Tibial artery (tissue), 4 donors: ENCODE measurements at regions of chr20 and their contacts with region 1.

Region 1: GRCh38 chr20:10708351-10709185 is 34.8 kb upstream of the JAG1 start:
- DNase-seq: no peak
- H3K4me3 ChIP-seq: no peak overlapping the region
- H3K27ac ChIP-seq: peak overlapping the region; percentile 62 to 67
- H3K4me1 ChIP-seq: peaks cover 3 to 66% (median 30%) of the 10 kb centered on the region in 4 donors
- H3K27me3 ChIP-seq: no peaks in the 10 kb centered on the region
- CTCF ChIP-seq: no peak

Region 2: DNA sequence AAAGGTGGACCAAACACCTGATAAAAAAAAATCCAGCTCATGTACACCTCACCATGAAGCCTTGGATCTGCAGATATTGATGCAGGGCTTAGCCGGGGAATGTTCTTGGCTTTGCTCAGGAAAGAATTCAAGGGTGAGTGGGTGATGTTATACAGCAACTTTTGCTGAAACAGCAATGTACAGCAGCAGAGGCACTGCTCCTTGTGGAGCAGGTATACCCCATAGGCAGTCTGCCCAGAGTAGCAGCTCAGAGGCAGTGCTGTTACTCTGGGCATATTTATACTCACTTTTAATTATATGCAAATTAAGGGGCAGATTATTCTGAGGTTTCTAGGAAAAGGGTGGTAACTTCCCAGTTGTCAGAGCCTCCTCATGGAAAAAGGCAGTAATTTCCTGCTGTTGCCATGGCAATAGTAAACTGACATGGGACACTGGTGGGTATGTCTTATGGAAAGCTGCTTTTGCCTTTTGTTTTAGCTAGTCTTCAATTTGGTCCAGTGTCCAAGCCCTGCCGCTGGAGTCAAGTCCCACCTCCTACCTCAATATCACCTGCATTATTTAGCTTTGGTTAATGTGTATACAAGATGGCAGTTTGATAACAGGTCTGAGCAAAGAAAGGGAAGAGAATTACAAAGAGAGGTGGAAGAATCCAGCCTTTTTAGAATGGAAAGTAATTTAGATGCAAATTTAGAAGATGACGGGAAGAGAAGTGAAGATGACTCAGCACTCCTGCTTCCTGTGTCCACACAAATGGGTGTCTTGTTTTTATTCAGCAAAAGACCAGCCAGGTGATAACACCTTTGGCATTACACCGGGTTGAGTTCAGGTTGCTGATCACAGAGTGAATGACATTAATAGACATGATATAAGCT is 75.4 kb after region 1 on chr20:
- intact Hi-C with region 1: no loop called
- DNase-seq: no peak
- H3K4me3 ChIP-seq: no peak overlapping the region
- H3K27ac ChIP-seq: no peak overlapping the region
- H3K4me1 ChIP-seq: peaks cover 0 to 2% (median 0%) of the 10 kb centered on the region in 4 donors
- H3K27me3 ChIP-seq: no peaks in the 10 kb centered on the region
- CTCF ChIP-seq: no peak

Region 3: GRCh38 chr20:10832141-10832540 is 123.6 kb after region 1 on chr20:
- intact Hi-C with region 1: no loop called
- DNase-seq: no peak
- H3K4me3 ChIP-seq: no peak overlapping the region
- H3K27ac ChIP-seq: no peak overlapping the region
- H3K4me1 ChIP-seq: no peaks in the 10 kb centered on the region
- H3K27me3 ChIP-seq: no peaks in the 10 kb centered on the region
- CTCF ChIP-seq: no peak

Region 4: GRCh38 chr20:10922941-10923340 is 214.4 kb after region 1 on chr20:
- intact Hi-C with region 1: loop called (anchors 5 kb)
- DNase-seq: no peak
- H3K4me3 ChIP-seq: no peak overlapping the region
- H3K27ac ChIP-seq: peak overlapping the region; percentile 2 to 3
- H3K4me1 ChIP-seq: peaks cover 0 to 55% (median 19%) of the 10 kb centered on the region in 4 donors
- H3K27me3 ChIP-seq: no peaks in the 10 kb centered on the region
- CTCF ChIP-seq: no peak